Activated CD4-positive, alpha-beta T cell treated with anti-CD3 and anti-CD28 coated beads, Interleukin-2, amount 10 ng/mL, durations not matched to agents 24 days and 14 days (primary cell): ENCODE measurements at regions of chr12 and their contacts with region 1.

Region 1: DNA sequence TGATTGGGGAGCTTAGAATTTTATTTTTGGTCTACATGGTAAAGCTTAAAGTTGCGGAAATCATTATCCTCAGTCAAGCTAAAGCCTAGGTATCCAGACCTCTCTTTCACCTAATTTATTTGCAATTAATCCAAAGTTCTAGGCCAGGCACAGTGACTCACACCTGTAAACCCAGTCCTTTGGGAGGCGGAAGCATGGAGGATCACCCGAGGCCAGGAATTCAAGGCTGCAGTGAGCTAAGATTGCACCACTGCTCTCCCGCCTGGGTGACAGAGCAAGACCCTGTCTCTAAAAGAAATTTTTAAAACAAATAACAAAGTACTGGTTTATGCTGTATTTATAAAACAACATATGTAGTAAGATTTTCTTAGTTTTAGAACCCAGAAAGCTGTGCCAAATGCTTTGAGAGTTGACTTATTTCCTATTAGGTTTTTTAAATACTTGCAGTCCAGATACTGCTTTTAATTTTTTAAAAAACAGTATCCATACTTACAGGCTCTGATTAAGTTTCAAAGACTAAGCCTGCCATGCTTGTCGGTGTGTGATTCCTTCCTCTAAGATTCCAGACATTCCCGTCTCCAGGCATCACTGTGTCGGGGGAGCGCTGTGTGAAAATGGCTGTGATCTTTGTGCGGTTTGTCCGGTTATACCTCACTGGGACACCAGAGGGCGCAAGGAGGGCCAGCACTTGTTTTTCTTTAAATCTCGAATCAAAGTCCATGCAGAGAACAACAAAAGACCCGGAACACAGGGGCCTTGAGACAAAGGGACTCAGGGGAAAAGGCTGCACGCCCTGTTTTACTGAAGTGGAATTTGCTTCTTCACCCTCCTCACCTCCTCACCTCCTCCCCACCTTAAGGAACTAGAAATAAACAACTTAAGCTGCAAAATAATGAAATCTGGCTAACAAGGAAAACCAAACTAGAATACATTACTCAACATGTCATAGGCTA is 24.6 kb upstream of the TMPO start:
- DNase-seq: peak; percentile 94
- H3K4me3 Mint-ChIP-seq: peak overlapping the region; percentile 44
- H3K27ac Mint-ChIP-seq: peak overlapping the region; percentile 91
- H3K4me1 Mint-ChIP-seq: peaks cover 7% of the 10 kb centered on the region
- H3K27me3 Mint-ChIP-seq: peaks cover 12% of the 10 kb centered on the region

Region 2: DNA sequence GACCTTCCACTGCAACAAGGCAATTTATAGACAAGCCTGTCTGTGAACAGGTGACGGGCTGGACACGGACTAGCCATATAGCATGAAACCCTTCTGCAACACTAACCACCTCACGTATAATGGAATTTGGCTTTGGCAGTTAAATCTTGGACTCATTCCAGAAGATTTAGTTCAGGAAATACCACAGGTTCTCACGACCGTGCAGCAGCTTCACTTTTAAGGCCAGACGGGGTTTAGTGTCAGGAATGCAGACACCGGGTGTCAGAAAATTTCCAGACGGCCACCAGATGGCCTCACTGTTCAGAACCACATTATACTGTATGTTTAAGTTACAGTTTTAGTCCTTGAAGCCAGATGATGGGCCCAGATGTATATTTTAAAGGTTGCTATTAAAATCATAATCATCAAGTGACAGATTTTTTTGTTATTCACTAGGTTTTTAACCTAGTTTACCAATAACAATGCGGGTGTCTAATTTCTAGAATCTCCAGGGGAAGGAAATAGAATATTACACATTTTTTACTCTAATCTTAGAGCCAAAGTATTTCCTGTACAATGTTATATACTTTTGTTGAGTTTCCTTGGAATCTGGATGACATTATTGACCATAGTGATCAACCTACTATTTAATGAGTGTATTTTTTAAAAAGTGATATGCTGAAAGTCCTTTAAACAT is 65.9 kb before region 1 on chr12:
- intact Hi-C with region 1: loop called (anchors 2 kb)
- DNase-seq: peak; percentile 85
- H3K4me3 Mint-ChIP-seq: no peak overlapping the region
- H3K27ac Mint-ChIP-seq: no peak overlapping the region
- H3K4me1 Mint-ChIP-seq: peaks cover 2% of the 10 kb centered on the region
- H3K27me3 Mint-ChIP-seq: peaks cover 9% of the 10 kb centered on the region

Region 3: DNA sequence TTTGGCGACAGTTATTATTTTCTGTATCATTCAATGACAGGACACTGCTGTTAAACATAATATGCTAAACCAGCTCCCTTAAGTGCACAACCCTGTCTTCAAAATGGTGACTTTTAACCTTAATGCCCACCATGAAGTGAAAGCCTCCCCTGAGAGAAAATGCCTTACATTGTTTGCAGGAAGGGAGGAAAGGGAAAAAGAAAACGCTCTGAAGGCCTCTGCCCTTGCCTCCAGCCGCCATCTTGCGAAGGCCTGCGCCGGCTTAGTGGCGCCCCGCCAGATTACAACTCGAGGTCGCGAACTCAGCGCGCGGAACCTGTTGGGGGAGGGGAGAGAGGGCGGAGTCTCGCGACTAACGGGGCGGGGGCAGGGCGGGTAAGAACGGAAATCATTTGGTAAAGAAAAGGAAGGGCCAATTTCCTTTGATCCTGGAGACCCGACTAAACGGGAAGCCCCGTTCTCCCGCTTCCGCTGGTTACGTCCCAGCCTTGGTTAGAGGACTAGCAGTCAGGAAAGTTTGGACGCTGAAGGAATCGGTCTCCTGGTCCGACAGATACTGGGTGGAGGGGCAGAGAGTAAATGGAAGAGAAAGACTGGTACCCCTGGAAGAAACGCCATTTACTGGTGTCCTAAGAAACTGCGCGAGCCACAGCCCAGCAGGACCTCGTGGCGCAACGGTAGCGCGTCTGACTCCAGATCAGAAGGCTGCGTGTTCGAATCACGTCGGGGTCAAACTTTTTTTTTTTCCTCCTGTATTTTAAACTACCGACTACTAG is 13.0 kb after region 1 on chr12:
- intact Hi-C with region 1: loop called (anchors 1 kb)
- DNase-seq: peak; percentile 97
- H3K4me3 Mint-ChIP-seq: peak overlapping the region; percentile 92
- H3K27ac Mint-ChIP-seq: peak overlapping the region; percentile 99
- H3K4me1 Mint-ChIP-seq: peaks cover 26% of the 10 kb centered on the region
- H3K27me3 Mint-ChIP-seq: peaks cover 7% of the 10 kb centered on the region

Region 4: GRCh38 chr12:98532681-98533304 is 42.0 kb after region 1 on chr12:
- intact Hi-C with region 1: loop called (anchors 1 kb)
- DNase-seq: peak; percentile 78
- H3K4me3 Mint-ChIP-seq: no peak overlapping the region
- H3K27ac Mint-ChIP-seq: peak overlapping the region; percentile 52
- H3K4me1 Mint-ChIP-seq: peaks cover 22% of the 10 kb centered on the region
- H3K27me3 Mint-ChIP-seq: no peaks in the 10 kb centered on the region

Region 5: DNA sequence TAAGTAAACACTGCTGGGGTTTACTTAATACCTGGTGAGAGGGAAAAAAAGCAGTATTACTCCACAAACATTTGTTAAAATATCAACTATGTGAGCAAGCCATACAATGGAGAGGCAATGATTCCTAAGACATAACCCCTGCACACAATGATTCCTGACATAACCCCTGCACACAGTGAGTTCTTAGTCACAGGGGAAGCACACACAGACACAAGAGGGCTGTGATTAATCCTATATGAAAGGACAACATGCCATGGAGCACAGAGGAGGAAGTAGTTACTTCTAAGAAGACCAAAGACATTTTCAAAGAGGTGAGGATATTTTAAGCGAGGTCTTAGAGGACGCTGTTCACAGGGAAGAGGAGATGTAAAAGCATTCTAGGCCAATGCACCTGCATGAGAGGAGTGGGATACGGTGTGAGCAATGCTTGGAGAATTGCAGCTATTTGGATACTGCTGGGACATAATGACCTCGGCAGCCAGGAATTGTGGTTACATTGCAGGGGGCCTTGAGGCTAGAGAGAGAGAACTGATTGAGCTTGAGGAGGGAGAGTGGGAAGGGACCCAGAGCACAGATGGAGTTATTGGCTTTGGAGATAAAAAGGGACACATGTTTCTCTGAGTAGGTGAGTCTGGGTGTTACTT is 366.2 kb after region 1 on chr12:
- intact Hi-C with region 1: no loop called
- DNase-seq: no peak
- H3K4me3 Mint-ChIP-seq: no peak overlapping the region
- H3K27ac Mint-ChIP-seq: no peak overlapping the region
- H3K4me1 Mint-ChIP-seq: no peaks in the 10 kb centered on the region
- H3K27me3 Mint-ChIP-seq: peaks cover 8% of the 10 kb centered on the region